CD14-positive monocyte (primary cell): ENCODE measurements at regions of chr14 and their contacts with region 1.

Region 1: DNA sequence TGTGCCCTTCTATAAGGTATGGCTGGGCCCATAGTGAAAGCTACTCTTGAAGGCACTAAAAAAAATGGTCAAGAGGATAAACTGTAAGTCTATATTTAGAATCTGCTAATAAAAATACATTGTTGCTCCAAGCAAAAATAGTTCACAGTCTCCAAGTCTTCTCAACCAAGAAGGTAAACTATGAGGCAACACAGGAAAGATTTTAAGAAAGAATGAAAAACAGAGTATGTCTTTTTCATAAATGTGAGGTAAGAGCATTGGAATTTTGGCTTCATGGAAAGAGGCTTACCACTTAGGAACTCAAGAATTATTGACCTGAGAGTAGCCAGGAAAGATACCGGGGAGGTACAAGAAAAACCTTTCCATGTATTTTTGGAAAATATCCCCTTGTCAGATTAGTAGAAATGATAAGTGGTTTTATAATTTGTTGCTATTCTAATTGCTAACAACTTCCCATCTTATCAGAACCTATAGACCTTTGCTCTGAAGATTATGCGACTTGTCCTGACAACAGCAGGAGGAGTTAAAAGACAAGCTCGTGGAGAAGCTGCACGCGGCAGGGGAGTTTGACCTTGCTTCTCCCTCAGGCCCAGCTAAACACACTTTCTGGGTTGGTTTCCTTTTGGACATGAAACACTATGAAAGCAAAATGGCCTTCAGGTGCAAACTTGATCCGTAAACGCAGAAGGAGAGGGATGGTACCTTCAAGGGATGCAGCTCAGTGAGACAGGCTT is 238.1 kb downstream of the FOXN3 start:
- DNase-seq: no peak
- H3K4me3 ChIP-seq: no peak overlapping the region
- H3K4me3 Mint-ChIP-seq: no peak overlapping the region
- H3K27ac ChIP-seq: peak overlapping the region in 1 of 2 donors; percentile 17
- H3K27ac Mint-ChIP-seq: peak overlapping the region in 4 of 7 donors; percentile 2 to 77 (median 36)
- H3K4me1 ChIP-seq: no peaks in the 10 kb centered on the region
- H3K4me1 Mint-ChIP-seq: peaks cover 5% of the 10 kb centered on the region
- H3K27me3 ChIP-seq: no peaks in the 10 kb centered on the region
- H3K27me3 Mint-ChIP-seq: no peaks in the 10 kb centered on the region
- CTCF ChIP-seq: no peak

Region 2: GRCh38 chr14:89190765-89191513 is 12.0 kb after region 1 on chr14:
- intact Hi-C with region 1: no loop called
- DNase-seq: no peak
- H3K4me3 ChIP-seq: no peak overlapping the region
- H3K4me3 Mint-ChIP-seq: no peak overlapping the region
- H3K27ac ChIP-seq: no peak overlapping the region
- H3K27ac Mint-ChIP-seq: peak overlapping the region in 1 of 7 donors; percentile 24
- H3K4me1 ChIP-seq: no peaks in the 10 kb centered on the region
- H3K4me1 Mint-ChIP-seq: peaks cover 11% of the 10 kb centered on the region
- H3K27me3 ChIP-seq: no peaks in the 10 kb centered on the region
- H3K27me3 Mint-ChIP-seq: peaks cover 0 to 2% (median 0%) of the 10 kb centered on the region in 3 donors
- CTCF ChIP-seq: no peak

Region 3: DNA sequence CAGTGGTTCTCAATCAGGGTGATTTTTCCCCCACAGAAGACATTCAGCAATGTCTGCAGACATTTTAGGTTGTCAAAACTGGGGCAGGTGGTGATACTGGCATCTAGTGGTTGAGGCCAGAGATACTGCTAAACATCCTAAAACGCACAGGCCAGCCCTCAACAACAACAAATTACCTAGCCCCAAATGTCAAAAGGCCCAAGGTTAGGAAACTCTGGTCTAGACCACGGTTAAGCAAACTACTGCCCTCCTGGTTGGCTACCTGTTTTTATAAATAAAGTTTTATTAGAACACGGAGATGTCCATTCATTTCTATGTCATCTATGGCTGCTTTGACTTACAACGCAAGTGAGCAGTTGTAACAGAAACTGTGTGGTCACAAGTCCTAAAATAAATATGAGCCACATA is 588.9 kb after region 1 on chr14:
- intact Hi-C with region 1: loop called in 1 of 2 experiments (anchors 5 kb)
- DNase-seq: peak; percentile 55 to 68 (median 64)
- H3K4me3 ChIP-seq: no peak overlapping the region
- H3K4me3 Mint-ChIP-seq: no peak overlapping the region
- H3K27ac ChIP-seq: peak overlapping the region in 1 of 2 donors; percentile 33
- H3K27ac Mint-ChIP-seq: peak overlapping the region in 3 of 7 donors; percentile 10 to 72 (median 32)
- H3K4me1 ChIP-seq: peaks cover 26 to 33% of the 10 kb centered on the region in 2 donors
- H3K4me1 Mint-ChIP-seq: peaks cover 32% of the 10 kb centered on the region
- H3K27me3 ChIP-seq: no peaks in the 10 kb centered on the region
- H3K27me3 Mint-ChIP-seq: peaks cover 0 to 6% (median 2%) of the 10 kb centered on the region in 3 donors
- CTCF ChIP-seq: peak; percentile 81

Region 4: DNA sequence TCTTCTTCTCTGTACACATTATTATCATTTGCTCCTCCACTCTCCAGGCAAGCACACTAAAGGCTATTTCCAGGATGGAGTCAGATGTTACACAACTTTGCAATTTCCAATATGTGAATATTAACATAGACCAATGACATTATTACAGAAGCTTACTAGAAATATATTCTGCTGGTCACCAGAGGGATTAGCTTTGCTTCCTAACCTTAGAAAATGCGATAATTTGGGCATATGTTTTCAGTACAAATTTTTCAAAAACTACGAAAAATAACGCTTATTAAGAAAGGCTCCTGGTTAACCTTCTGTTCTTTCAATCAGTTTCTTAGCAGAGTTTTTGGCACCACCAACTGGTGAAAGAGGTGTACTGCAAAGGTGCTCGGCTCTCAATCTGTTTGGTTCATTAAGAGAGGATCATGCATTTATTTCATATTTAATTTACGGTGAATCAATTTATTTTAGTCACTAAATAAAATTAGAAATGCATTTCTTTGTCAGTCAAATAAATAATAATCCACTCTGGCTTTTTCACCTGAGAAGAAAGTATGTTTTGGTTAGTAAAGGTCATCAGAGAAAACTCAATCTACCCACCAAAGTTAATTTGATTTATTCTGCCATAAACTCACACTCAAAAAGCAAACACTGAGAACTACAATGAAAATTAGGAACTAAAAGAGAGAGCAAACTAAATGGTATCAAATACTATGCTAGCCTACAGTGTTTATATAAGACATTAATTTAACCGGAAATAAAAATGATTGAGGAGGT is 736.3 kb after region 1 on chr14:
- intact Hi-C with region 1: loop called (anchors 5 to 10 kb)
- DNase-seq: peak; percentile 47 to 76 (median 57)
- H3K4me3 ChIP-seq: no peak overlapping the region
- H3K4me3 Mint-ChIP-seq: no peak overlapping the region
- H3K27ac ChIP-seq: no peak overlapping the region
- H3K27ac Mint-ChIP-seq: peak overlapping the region in 1 of 7 donors; percentile 44
- H3K4me1 ChIP-seq: peaks cover 5 to 15% of the 10 kb centered on the region in 2 donors
- H3K4me1 Mint-ChIP-seq: peaks cover 12% of the 10 kb centered on the region
- H3K27me3 ChIP-seq: no peaks in the 10 kb centered on the region
- H3K27me3 Mint-ChIP-seq: peaks cover 2 to 5% (median 2%) of the 10 kb centered on the region in 3 donors
- CTCF ChIP-seq: peak; percentile 94